Esophagus muscularis mucosa (tissue), 4 donors: ENCODE measurements at regions of chr5 and their contacts with region 1.

Region 1: GRCh38 chr5:90529194-90529938 is at the start of gene LYSMD3:
- DNase-seq: peak; percentile 99
- H3K4me3 ChIP-seq: peak within 1 kb of the TSS; percentile 78 to 97 (median 86)
- H3K27ac ChIP-seq: peak within 1 kb of the TSS; percentile 87 to 94 (median 92)
- H3K4me1 ChIP-seq: peaks cover 11 to 45% (median 41%) of the 10 kb centered on the region in 4 donors
- H3K27me3 ChIP-seq: peaks cover 0 to 15% (median 0%) of the 10 kb centered on the region in 4 donors
- CTCF ChIP-seq: no peak
- EP300 ChIP-seq: peak; percentile 44
- POLR2A ChIP-seq: peak; percentile 84
- total RNA-seq, gene LYSMD3: 12.9 to 21.2 (median 16.3) TPM

Region 2: DNA sequence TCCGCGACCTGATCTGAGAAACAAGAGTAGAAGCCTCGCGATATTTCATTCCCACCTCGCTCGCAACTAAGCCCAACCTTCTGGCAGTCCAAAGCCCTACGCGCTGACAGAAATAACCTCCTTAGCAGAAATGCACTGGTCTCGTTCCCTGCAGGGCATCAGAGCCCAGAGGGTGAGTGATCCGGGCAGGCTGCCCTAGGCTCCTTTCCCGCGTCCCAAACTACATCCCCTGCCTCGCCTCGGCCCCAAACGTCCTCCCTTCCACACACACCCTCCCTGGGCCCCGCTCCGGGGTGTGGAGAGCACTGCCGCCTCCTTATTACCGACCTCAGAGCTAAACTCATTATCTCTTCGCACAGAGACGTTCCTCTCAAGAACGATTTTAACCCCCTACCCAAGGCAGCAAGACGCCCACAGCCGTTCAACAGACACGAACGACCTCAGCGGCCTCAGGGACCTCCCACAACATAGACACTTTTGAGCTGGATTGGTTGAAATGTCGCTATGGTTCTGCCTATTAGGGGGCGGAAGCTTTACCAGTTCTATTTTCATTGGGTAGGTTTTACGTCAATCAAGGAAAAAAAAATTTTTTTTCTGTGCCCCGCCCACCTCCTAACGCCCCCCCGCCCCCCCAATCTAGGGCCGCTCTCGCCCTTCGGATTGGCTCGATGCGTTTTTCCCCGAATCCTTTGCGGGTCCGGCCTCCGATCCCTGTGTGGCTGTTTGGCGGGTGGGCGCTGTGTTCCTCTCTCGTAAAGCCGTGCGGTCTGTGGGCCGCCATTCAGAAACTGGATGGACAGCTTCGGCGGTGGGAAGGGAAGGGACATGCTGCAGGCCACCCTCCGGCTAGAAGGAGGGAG is 119.8 kb before region 1 on chr5 and contains the start of gene CETN3:
- intact Hi-C with region 1: loop called (anchors 2 kb)
- DNase-seq: peak; percentile 98
- H3K4me3 ChIP-seq: peak within 1 kb of the TSS; percentile 67 to 94 (median 79)
- H3K27ac ChIP-seq: peak within 1 kb of the TSS; percentile 92 to 99 (median 96)
- H3K4me1 ChIP-seq: peaks cover 8 to 22% (median 12%) of the 10 kb centered on the region in 4 donors
- H3K27me3 ChIP-seq: no peaks in the 10 kb centered on the region
- CTCF ChIP-seq: peak in 1 of 3 experiments; percentile 3
- EP300 ChIP-seq: no peak
- POLR2A ChIP-seq: peak; percentile 10
- total RNA-seq, gene CETN3: 4.3 to 8.7 (median 6.2) TPM

Region 3: GRCh38 chr5:90440644-90441043 is 88.7 kb before region 1 on chr5:
- intact Hi-C with region 1: loop called (anchors 2 kb)
- DNase-seq: no peak
- H3K4me3 ChIP-seq: no peak overlapping the region
- H3K27ac ChIP-seq: no peak overlapping the region
- H3K4me1 ChIP-seq: peaks cover 0 to 9% (median 2%) of the 10 kb centered on the region in 4 donors
- H3K27me3 ChIP-seq: no peaks in the 10 kb centered on the region
- CTCF ChIP-seq: no peak
- EP300 ChIP-seq: no peak
- POLR2A ChIP-seq: no peak

Region 4: GRCh38 chr5:90474235-90475109 is 54.9 kb before region 1 on chr5 and contains the starts of genes MBLAC2 and POLR3G:
- intact Hi-C with region 1: loop called (anchors 1 kb)
- DNase-seq: peak; percentile 96
- H3K4me3 ChIP-seq: peak within 1 kb of the TSS; percentile 74 to 94 (median 78)
- H3K27ac ChIP-seq: peak within 1 kb of the TSS; percentile 65 to 81 (median 79)
- H3K4me1 ChIP-seq: peaks cover 10 to 30% (median 30%) of the 10 kb centered on the region in 4 donors
- H3K27me3 ChIP-seq: no peaks in the 10 kb centered on the region
- CTCF ChIP-seq: peak in 2 of 3 experiments; percentile 39 to 60
- EP300 ChIP-seq: no peak
- POLR2A ChIP-seq: peak; percentile 24
- total RNA-seq, gene MBLAC2: 2.2 to 5.6 (median 4.6) TPM
- total RNA-seq, gene POLR3G: 0.42 to 2.5 (median 1.4) TPM